ENCODE measurements at regions of chr1 and their contacts with region 1.

Region 1: GRCh38 chr1:75400716-75401115 is 210.2 kb downstream of the SLC44A5 start:
- DNase-seq: no peak
- H3K4me3 ChIP-seq: no peak overlapping the region
- H3K27ac ChIP-seq: no peak overlapping the region
- H3K4me1 ChIP-seq: no peaks in the 10 kb centered on the region
- H3K27me3 ChIP-seq: no peaks in the 10 kb centered on the region
- CTCF ChIP-seq: no peak
- POLR2A ChIP-seq: no peak

Region 2: GRCh38 chr1:75632350-75632949 is 231.7 kb after region 1 on chr1:
- CTCF ChIA-PET with region 1: no interaction called
- POLR2A ChIA-PET with region 1: no interaction called
- dilution Hi-C with region 1: no loop called
- intact Hi-C with region 1: loop called (anchors 5 kb)
- DNase-seq: peak; percentile 70
- H3K4me3 ChIP-seq: no peak overlapping the region
- H3K27ac ChIP-seq: no peak overlapping the region
- H3K4me1 ChIP-seq: no peaks in the 10 kb centered on the region
- H3K27me3 ChIP-seq: no peaks in the 10 kb centered on the region
- CTCF ChIP-seq: peak; percentile 64 to 70
- POLR2A ChIP-seq: no peak

Measured in endothelial cell of umbilical vein (primary cell).